Cardiac septum (tissue), 1 donor: ENCODE measurements at regions of chr1 and their contacts with region 1.

Region 1: GRCh38 chr1:202192770-202193613 is 607 bp upstream of the LGR6 start:
- DNase-seq: no peak

Region 2: DNA sequence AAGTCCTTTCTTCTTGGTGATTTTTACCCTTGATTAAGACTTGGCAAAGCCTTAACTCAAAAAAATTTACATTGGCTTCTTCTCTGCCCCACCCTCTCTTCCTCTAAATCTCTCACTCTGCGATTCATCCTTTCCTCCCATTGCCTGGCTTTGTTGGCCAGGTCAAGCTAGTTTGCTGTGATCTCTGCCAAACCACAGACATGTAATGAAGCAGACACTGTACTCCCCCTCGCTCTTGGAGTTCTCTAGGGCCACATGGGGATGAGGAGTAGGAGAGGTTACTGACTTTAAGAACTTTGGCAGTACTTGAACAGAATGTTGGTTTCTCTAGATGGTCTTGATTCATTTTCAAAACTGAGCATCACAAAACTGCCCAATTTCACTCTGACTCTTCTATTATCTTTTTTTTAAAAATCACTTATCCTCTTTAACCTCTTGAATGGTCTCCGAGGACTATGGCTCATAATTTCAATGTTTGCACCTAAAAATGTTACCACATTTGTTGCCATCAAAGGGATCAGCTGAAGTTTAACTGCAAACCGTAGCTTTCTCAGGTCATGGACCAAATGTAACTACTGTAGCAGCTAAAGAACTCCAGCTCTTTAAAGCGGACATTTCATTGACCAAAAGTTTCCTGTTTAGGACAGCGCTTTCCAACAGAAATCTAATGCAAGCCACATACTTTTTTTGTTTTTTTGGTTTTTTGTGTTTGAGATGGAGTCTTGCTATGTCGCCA is 426.7 kb before region 1 on chr1:
- intact Hi-C with region 1: no loop called
- DNase-seq: no peak

Region 3: GRCh38 chr1:202235856-202236837 is 43.2 kb after region 1 on chr1:
- intact Hi-C with region 1: loop called (anchors 5 kb)
- DNase-seq: peak; percentile 70